ENCODE measurements at regions of chr2 and their contacts with region 1.

Region 1: GRCh38 chr2:206693399-206694137 is 24.6 kb downstream of the DYTN start:
- DNase-seq: no peak
- ATAC-seq: peak; percentile 31
- H3K4me3 Mint-ChIP-seq: no peak overlapping the region
- H3K27ac Mint-ChIP-seq: no peak overlapping the region
- H3K4me1 Mint-ChIP-seq: no peaks in the 10 kb centered on the region
- H3K27me3 Mint-ChIP-seq: peaks cover 12% of the 10 kb centered on the region
- CTCF ChIP-seq: no peak

Region 2: DNA sequence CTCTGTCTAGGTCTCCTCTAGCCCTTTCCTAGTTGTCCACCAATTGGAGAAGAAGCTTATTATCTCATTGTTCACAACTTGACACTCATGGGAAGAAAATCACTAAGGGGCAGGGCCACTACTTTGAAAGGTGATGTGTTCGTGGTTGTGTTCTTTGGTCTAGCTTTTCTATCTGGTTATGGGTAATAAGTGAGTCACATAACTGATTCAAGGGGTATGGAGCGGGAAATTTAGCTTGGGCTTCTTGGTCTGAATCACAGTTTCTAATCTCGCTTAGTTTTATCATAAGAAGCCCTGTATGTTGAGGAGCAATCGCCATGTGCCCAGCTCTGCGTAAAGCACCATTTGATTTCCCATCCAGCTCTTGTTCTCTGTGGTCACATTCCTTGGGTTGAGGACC is 43.4 kb after region 1 on chr2:
- CTCF ChIA-PET with region 1: no interaction called
- POLR2A ChIA-PET with region 1: no interaction called
- intact Hi-C with region 1: no loop called
- DNase-seq: no peak
- ATAC-seq: no peak
- H3K4me3 Mint-ChIP-seq: no peak overlapping the region
- H3K27ac Mint-ChIP-seq: no peak overlapping the region
- H3K4me1 Mint-ChIP-seq: no peaks in the 10 kb centered on the region
- H3K27me3 Mint-ChIP-seq: peaks cover 15% of the 10 kb centered on the region
- CTCF ChIP-seq: no peak

Region 3: DNA sequence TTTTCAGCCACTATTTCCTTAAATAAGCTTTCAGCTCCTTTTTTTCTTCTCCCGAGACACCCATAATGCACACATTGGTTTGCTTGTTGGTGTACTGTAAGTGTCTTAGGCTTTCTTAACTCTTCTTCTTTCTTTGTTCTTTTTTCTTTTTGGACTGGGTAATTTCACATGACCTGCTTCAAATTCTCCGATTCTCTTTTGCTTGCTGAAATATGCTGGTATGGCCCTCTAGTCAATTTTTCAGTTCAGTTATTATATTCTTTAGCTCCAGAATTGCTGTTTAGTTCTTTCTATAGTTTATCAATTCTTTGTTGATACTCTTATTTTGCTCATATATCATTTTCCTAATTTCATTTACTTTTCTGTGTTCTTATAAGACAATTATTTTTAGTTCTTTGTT is 87.1 kb after region 1 on chr2:
- CTCF ChIA-PET with region 1: interaction called, 4 read pairs
- POLR2A ChIA-PET with region 1: no interaction called
- intact Hi-C with region 1: loop called (anchors 1 kb)
- DNase-seq: no peak
- ATAC-seq: no peak
- H3K4me3 Mint-ChIP-seq: no peak overlapping the region
- H3K27ac Mint-ChIP-seq: no peak overlapping the region
- H3K4me1 Mint-ChIP-seq: peaks cover 12% of the 10 kb centered on the region
- H3K27me3 Mint-ChIP-seq: no peaks in the 10 kb centered on the region
- CTCF ChIP-seq: no peak

Region 4: DNA sequence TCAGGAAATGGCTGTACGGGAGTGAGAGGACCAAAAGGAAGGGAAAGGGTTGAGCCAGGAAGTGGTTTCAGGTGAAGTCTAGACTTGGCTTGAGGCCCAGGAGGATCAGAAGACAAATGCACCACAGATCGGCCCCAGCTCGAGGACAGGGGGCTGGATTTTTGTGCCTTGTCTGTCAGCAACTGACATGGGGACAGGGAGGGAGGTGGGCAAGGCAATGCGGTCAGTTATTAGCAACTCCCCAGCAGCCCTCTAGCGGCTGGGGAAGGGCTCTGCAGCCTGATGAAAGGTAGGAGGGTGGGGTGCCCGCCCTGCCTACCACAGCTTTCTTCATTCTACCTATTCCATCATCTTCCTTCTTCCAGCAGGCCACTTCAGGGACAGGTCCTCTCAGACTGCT is 295.7 kb after region 1 on chr2:
- CTCF ChIA-PET with region 1: no interaction called
- POLR2A ChIA-PET with region 1: no interaction called
- intact Hi-C with region 1: loop called (anchors 1 kb)
- DNase-seq: no peak
- ATAC-seq: peak; percentile 66
- H3K4me3 Mint-ChIP-seq: no peak overlapping the region
- H3K27ac Mint-ChIP-seq: no peak overlapping the region
- H3K4me1 Mint-ChIP-seq: peaks cover 3% of the 10 kb centered on the region
- H3K27me3 Mint-ChIP-seq: peaks cover 15% of the 10 kb centered on the region
- CTCF ChIP-seq: peak; percentile 33

Region 5: DNA sequence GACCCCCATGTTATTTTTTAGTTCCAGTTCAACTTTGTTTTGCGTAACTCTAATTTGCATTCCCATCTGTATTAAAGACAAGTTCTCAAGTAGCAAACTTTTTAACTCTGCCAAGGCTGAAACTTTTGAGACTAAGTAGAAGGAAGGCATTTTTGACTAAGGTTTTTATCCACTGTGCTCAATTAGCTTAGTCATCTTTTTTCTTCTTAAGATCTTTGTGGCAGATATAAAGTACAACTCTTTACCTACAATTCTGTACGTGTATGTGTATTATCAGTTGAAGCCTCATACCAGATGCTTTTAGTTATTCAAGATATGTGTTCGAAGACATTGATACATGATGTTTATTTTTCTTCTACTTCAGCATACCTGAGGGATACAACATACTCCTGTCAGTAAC is 877.8 kb after region 1 on chr2:
- CTCF ChIA-PET with region 1: no interaction called
- POLR2A ChIA-PET with region 1: no interaction called
- intact Hi-C with region 1: loop called (anchors 10 kb)
- DNase-seq: no peak
- ATAC-seq: no peak
- H3K4me3 Mint-ChIP-seq: no peak overlapping the region
- H3K27ac Mint-ChIP-seq: no peak overlapping the region
- H3K4me1 Mint-ChIP-seq: peaks cover 8% of the 10 kb centered on the region
- H3K27me3 Mint-ChIP-seq: no peaks in the 10 kb centered on the region
- CTCF ChIP-seq: no peak

Region 6: DNA sequence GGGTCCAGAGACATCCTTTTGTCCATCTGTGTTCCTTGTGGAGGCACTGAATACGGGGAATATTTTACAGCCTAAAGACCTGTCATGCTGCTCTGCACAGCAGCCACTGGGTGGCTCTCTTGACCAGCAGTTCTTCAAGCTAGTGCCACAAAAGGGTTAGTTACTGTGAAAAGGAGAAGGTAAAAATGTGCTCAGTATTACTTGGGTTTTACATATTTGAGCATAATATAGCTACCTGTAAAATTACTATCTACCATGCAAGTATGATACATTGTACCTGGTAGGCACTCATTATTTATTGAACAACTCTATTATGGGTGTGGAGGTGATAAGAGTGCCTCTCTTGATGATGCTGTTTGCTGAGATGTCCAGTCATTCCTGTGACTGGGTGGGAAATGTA is 1052.6 kb after region 1 on chr2:
- CTCF ChIA-PET with region 1: no interaction called
- POLR2A ChIA-PET with region 1: no interaction called
- intact Hi-C with region 1: loop called (anchors 5 kb)
- DNase-seq: peak; percentile 22
- ATAC-seq: peak; percentile 95
- H3K4me3 Mint-ChIP-seq: no peak overlapping the region
- H3K27ac Mint-ChIP-seq: no peak overlapping the region
- H3K4me1 Mint-ChIP-seq: no peaks in the 10 kb centered on the region
- H3K27me3 Mint-ChIP-seq: no peaks in the 10 kb centered on the region
- CTCF ChIP-seq: peak; percentile 46

Region 7: GRCh38 chr2:208033758-208034502 is 1340.4 kb after region 1 on chr2:
- CTCF ChIA-PET with region 1: no interaction called
- POLR2A ChIA-PET with region 1: no interaction called
- intact Hi-C with region 1: loop called (anchors 10 kb)
- DNase-seq: no peak
- ATAC-seq: peak; percentile 69
- H3K4me3 Mint-ChIP-seq: no peak overlapping the region
- H3K27ac Mint-ChIP-seq: no peak overlapping the region
- H3K4me1 Mint-ChIP-seq: no peaks in the 10 kb centered on the region
- H3K27me3 Mint-ChIP-seq: no peaks in the 10 kb centered on the region
- CTCF ChIP-seq: no peak

Region 8: DNA sequence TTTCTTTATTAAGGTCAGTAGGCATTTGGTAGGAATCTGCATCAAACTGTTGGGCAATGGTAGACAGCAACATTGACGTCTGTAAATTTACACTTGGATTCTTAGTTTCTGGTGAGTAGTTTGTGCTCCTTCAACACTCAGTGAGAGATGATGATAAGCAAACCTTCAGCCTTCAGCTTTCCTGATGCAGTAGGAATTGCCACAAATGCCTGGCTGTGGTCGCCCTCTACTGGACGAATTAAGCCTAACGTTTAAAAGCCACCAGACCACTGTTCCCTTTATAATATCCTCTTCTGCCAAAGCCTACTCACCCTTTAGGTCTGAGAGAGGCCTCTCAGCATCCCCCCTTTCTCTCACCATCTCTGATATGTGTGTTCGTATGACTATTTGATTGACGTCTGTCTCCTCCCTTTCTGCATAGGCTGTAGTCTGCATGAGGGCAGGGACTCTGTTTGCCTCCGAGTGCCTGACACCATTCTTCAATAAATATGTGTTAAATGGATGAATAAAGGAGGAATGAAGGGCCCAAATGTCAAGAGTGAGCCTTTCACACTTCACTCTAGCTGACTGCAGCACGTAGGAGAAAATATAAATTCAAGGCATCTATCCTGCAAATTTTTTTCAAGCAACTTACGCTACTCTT is 1378.8 kb after region 1 on chr2:
- CTCF ChIA-PET with region 1: no interaction called
- POLR2A ChIA-PET with region 1: no interaction called
- intact Hi-C with region 1: loop called (anchors 1 kb)
- DNase-seq: no peak
- ATAC-seq: peak; percentile 71
- H3K4me3 Mint-ChIP-seq: no peak overlapping the region
- H3K27ac Mint-ChIP-seq: no peak overlapping the region
- H3K4me1 Mint-ChIP-seq: no peaks in the 10 kb centered on the region
- H3K27me3 Mint-ChIP-seq: peaks cover 7% of the 10 kb centered on the region
- CTCF ChIP-seq: peak; percentile 63